Heart right ventricle (tissue), 16 donors: ENCODE measurements at regions of chr6 and their contacts with region 1.

Region 1: GRCh38 chr6:43143235-43144124 is 27.6 kb upstream of the SRF start:
- DNase-seq: peak; percentile 86 to 88
- ATAC-seq: peak; percentile 94 to 98 (median 96)
- H3K4me3 ChIP-seq: peak overlapping the region in 1 of 10 donors; percentile 22
- H3K27ac ChIP-seq: peak overlapping the region in 8 of 10 donors; percentile 2 to 69 (median 44)
- H3K4me1 ChIP-seq: peaks cover 7 to 23% (median 11%) of the 10 kb centered on the region in 9 donors
- H3K27me3 ChIP-seq: no peaks in the 10 kb centered on the region
- CTCF ChIP-seq: peak; percentile 84 to 99 (median 94)

Region 2: DNA sequence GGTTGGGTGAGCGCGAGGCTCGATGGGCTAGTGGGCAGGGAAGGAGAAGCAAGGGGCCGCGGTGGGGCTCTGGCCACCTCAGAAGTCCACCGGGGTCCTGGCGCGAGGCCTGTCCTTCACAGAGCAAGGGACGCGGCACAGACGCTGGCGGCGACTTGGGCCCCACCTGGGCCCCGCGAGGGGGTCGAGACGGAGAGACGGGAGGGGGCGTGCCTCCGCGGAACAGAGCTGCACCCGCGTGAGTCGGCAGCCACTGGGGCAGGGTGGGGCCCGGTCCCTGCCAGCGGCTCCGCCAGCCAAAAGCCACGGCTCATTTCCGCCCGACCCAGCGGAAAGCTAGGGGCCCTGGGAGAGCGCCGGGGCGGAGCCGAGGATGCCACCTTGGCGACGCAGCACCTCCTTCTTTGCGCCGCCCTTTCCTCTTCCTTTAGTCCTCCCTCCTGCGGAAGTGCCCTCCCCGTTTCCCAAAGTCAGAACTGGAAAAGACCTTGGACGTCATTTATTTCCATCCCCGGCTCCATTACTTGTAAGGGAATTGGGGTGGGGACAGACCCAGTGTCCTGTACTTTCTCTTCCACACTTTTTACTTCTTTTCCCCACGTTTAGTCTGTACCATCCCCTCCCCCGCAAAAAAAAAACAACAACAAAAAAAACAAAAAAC is 89.8 kb before region 1 on chr6 and contains the start of gene CUL7:
- intact Hi-C with region 1: loop called in 1 of 10 experiments (anchors 5 kb)
- DNase-seq: peak; percentile 93 to 94
- ATAC-seq: peak; percentile 94 to 97 (median 96)
- H3K4me3 ChIP-seq: peak within 1 kb of the TSS; percentile 40 to 78 (median 64)
- H3K27ac ChIP-seq: peak within 1 kb of the TSS; percentile 63 to 98 (median 96)
- H3K4me1 ChIP-seq: peaks cover 4 to 36% (median 26%) of the 10 kb centered on the region in 9 donors
- H3K27me3 ChIP-seq: no peaks in the 10 kb centered on the region
- CTCF ChIP-seq: peak in 2 of 9 donors; percentile 3 to 20
- total RNA-seq, gene CUL7: 7.1 to 11.2 (median 8.6) TPM